ENCODE measurements at regions of chr12 and their contacts with region 1.

Region 1: DNA sequence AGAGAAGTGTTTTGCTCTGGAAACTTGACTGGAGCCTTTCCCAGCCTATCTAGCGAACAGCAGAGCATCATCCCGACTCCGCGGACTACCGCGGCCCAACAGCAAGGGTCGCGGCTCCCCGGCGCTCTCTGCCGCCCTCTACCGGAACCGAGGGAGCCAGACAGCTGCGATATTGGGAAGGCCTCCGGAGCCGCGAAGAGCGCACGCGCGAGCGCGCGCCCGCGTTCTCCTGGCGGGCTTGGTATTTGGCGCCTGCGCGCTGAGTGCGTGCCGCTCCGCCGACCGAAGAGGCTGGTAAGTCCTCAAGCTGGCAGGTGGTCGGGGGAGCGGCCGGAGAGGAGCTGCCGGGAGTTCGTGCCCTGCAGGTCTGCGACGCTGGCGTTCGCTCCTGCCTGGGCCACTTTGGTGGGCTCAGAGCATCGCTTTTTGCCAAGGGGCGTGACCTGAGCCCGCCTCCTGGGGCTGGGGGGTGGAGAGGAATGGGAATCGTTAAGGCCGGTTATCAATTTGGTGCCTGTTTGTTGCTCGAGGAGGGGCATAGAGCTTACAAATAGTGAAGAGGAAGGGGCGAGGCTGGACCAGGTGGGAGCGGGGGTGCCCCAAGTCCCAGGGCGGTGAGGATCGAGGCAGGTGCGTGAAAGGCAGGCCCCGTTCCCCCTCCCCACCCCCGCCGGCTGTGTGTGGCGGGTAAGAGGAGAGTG is at the start of gene TMEM106C:
- DNase-seq: peak; percentile 95
- ATAC-seq: peak; percentile 93
- H3K4me3 Mint-ChIP-seq: peak within 1 kb of the TSS; percentile 94
- H3K27ac Mint-ChIP-seq: peak within 1 kb of the TSS; percentile 48; the same call in 1 of the 2 replicates
- H3K4me1 Mint-ChIP-seq: peaks cover 45% of the 10 kb centered on the region
- H3K27me3 Mint-ChIP-seq: peaks cover 56% of the 10 kb centered on the region
- CTCF ChIP-seq: peak; percentile 89
- total RNA-seq, gene TMEM106C: 48.3 to 50.8 TPM (median 49.1 TPM) in 3 replicates

Region 2: GRCh38 chr12:47870175-47870781 is 93.2 kb before region 1 on chr12:
- CTCF ChIA-PET with region 1: interaction called, 11 read pairs
- POLR2A ChIA-PET with region 1: no interaction called
- DNase-seq: peak; percentile 68
- ATAC-seq: peak; percentile 100
- H3K4me3 Mint-ChIP-seq: no peak overlapping the region
- H3K27ac Mint-ChIP-seq: no peak overlapping the region
- H3K4me1 Mint-ChIP-seq: peaks cover 8% of the 10 kb centered on the region
- H3K27me3 Mint-ChIP-seq: peaks cover 5% of the 10 kb centered on the region
- CTCF ChIP-seq: peak; percentile 24; the same call in 1 of the 2 replicates

Region 3: DNA sequence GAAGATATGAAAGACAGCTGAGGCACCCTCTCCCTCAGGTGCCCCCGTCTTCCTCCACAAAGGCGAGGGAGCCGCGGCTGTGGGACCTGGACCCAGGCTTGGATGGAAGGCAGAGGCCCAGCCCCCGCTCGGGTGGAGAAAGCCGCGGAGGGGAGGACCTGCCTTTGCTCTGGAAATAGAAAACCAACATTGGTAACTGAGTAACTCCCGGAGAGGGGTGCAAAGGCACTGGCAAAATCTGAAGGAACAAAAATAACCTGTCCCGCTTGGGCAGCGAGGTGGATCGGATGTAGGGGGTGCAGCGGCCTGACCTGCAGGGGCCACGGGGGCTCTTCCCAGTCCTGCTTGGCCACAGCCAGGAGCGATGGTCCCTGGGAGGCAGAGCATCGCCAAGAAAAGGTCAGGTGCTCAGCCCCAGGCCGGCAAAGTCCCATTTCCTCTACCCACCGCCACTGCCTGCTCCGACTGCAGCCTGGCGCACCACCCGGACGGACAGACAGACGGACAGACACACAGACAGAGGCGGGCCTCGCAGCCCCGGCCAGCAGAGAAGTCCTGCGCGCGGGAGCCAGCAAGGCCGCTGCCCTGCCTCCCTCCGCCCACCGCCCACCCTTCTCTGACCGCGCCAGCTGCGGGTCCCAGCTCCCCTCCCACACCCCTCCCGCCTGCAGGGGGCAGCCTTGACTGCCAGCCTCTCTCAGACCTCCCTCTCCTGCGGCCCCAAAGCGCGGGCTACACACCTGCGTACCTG is 21.5 kb before region 1 on chr12:
- CTCF ChIA-PET with region 1: interaction called, 16 read pairs
- POLR2A ChIA-PET with region 1: no interaction called
- DNase-seq: peak; percentile 89
- ATAC-seq: peak; percentile 93
- H3K4me3 Mint-ChIP-seq: peak overlapping the region; percentile 15; the same call in 1 of the 2 replicates
- H3K27ac Mint-ChIP-seq: no peak overlapping the region
- H3K4me1 Mint-ChIP-seq: peaks cover 20% of the 10 kb centered on the region
- H3K27me3 Mint-ChIP-seq: peaks cover 32% of the 10 kb centered on the region
- CTCF ChIP-seq: peak; percentile 48

Region 4: GRCh38 chr12:48001505-48002413 is 38.3 kb after region 1 on chr12:
- CTCF ChIA-PET with region 1: interaction called, 18 read pairs
- POLR2A ChIA-PET with region 1: interaction called, 4 read pairs
- DNase-seq: peak; percentile 78
- ATAC-seq: peak; percentile 57
- H3K4me3 Mint-ChIP-seq: peak overlapping the region; percentile 81
- H3K27ac Mint-ChIP-seq: 0 out of 2 replicates have a peak overlapping the region, but pooled peaks have one; percentile 49
- H3K4me1 Mint-ChIP-seq: peaks cover 67% of the 10 kb centered on the region
- H3K27me3 Mint-ChIP-seq: peaks cover 100% of the 10 kb centered on the region
- CTCF ChIP-seq: no peak

Region 5: DNA sequence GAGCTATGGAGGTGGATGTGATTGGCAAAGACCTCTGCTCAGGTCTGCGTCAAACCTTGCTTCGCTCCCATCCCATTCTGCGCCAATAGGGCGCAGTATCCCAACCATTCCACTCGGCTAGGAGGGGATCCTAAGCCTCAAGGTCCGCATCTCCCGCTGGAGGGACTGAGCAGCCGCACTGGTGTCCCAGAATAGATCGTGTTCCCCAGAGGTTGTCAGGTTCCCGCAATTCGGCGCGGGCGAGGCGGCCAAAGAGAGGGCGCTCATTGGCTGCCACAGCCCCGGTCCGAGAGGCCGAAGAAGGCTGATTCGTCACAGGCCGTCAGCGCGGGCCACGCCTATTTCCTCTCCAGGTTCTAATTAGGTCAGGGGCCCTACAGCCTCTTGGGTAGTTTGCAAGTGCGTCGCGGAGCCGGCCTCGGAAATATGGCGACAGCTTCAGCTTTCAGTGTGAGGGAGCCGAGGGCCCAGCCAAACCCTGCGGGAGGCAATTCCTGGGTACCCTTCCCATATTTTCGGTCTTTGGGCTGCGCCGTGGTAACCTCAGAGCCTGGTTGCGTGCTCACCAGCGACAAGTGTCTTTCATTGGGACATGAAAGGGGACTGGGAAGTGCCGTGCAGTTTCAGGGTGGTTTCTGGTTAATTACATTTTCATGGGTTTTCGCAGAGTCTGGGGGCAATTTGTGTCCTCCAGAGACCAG is 234.6 kb after region 1 on chr12:
- CTCF ChIA-PET with region 1: interaction called, 12 read pairs
- POLR2A ChIA-PET with region 1: no interaction called
- DNase-seq: peak; percentile 97
- ATAC-seq: peak; percentile 96
- H3K4me3 Mint-ChIP-seq: peak overlapping the region; percentile 78
- H3K27ac Mint-ChIP-seq: peak overlapping the region; percentile 97
- H3K4me1 Mint-ChIP-seq: 0 out of 2 replicates have a peak, but pooled peaks cover 7% of the 10 kb centered on the region
- H3K27me3 Mint-ChIP-seq: peaks cover 78% of the 10 kb centered on the region
- CTCF ChIP-seq: no peak

Measured in WTC11 (cell line).